IMR-90 (cell line): ENCODE measurements at regions of chr16 and their contacts with region 1.

Region 1: GRCh38 chr16:1763521-1764511 is 7.5 kb downstream of the NME3 start:
- DNase-seq: no peak
- ATAC-seq: no peak
- H3K4me3 ChIP-seq: no peak overlapping the region
- H3K27ac ChIP-seq: no peak overlapping the region
- H3K4me1 ChIP-seq: no peaks in the 10 kb centered on the region
- H3K27me3 ChIP-seq: no peaks in the 10 kb centered on the region
- CTCF ChIP-seq: peak; percentile 27; the same call in 1 of the 2 replicates
- POLR2A ChIP-seq: no peak
- RAD21 ChIP-seq: peak; percentile 37

Region 2: GRCh38 chr16:1713933-1714332 is 49.9 kb before region 1 on chr16:
- CTCF ChIA-PET with region 1: interaction called, 4 read pairs
- POLR2A ChIA-PET with region 1: no interaction called
- dilution Hi-C with region 1: no loop called
- in situ Hi-C with region 1: loop called (anchors 5 kb)
- intact Hi-C with region 1: no loop called
- DNase-seq: no peak
- ATAC-seq: no peak
- H3K4me3 ChIP-seq: no peak overlapping the region
- H3K27ac ChIP-seq: no peak overlapping the region
- H3K4me1 ChIP-seq: peaks cover 8% of the 10 kb centered on the region
- H3K27me3 ChIP-seq: no peaks in the 10 kb centered on the region
- CTCF ChIP-seq: no peak
- POLR2A ChIP-seq: no peak
- RAD21 ChIP-seq: no peak

Region 3: GRCh38 chr16:1826691-1827575 is 63.1 kb after region 1 on chr16 and contains the starts of genes FAHD1 and HAGH:
- CTCF ChIA-PET with region 1: no interaction called
- POLR2A ChIA-PET with region 1: no interaction called
- dilution Hi-C with region 1: no loop called
- in situ Hi-C with region 1: no loop called
- intact Hi-C with region 1: no loop called
- DNase-seq: peak; percentile 94
- ATAC-seq: peak; percentile 93
- H3K4me3 ChIP-seq: peak within 1 kb of the TSS; percentile 73
- H3K27ac ChIP-seq: peak within 1 kb of the TSS; percentile 58
- H3K4me1 ChIP-seq: peaks cover 6% of the 10 kb centered on the region; the same call in 1 of the 2 replicates
- H3K27me3 ChIP-seq: no peaks in the 10 kb centered on the region
- CTCF ChIP-seq: no peak
- POLR2A ChIP-seq: peak; percentile 67; the same call in 1 of the 2 replicates
- RAD21 ChIP-seq: no peak
- total RNA-seq, gene FAHD1: 85.8 and 85.9 TPM in 2 replicates
- total RNA-seq, gene HAGH: 30.8 and 35.6 TPM in 2 replicates

Region 4: GRCh38 chr16:2003827-2004641 is 240.2 kb after region 1 on chr16:
- CTCF ChIA-PET with region 1: no interaction called
- POLR2A ChIA-PET with region 1: no interaction called
- dilution Hi-C with region 1: no loop called
- in situ Hi-C with region 1: no loop called
- intact Hi-C with region 1: no loop called
- DNase-seq: peak; percentile 81
- ATAC-seq: peak; percentile 96
- H3K4me3 ChIP-seq: no peak overlapping the region
- H3K27ac ChIP-seq: 0 out of 2 replicates have a peak overlapping the region, but pooled peaks have one; percentile 14
- H3K4me1 ChIP-seq: peaks cover 21% of the 10 kb centered on the region
- H3K27me3 ChIP-seq: no peaks in the 10 kb centered on the region
- CTCF ChIP-seq: peak; percentile 98
- POLR2A ChIP-seq: no peak
- RAD21 ChIP-seq: peak; percentile 61